ENCODE measurements at regions of chr9 and their contacts with region 1.

Region 1: GRCh38 chr9:37784616-37785483 is at the start of gene EXOSC3:
- DNase-seq: peak; percentile 71 to 84
- H3K4me3 ChIP-seq: peak within 1 kb of the TSS; percentile 78 to 99 (median 98)
- H3K27ac ChIP-seq: peak within 1 kb of the TSS; percentile 78 to 90
- H3K4me1 ChIP-seq: peaks cover 0 to 13% of the 10 kb centered on the region in 2 donors
- H3K27me3 ChIP-seq: peaks cover 0 to 3% of the 10 kb centered on the region in 2 donors
- CTCF ChIP-seq: no peak
- POLR2A ChIP-seq: peak; percentile 55
- total RNA-seq, gene EXOSC3: 40.6 to 55.0 (median 49.9) TPM

Region 2: DNA sequence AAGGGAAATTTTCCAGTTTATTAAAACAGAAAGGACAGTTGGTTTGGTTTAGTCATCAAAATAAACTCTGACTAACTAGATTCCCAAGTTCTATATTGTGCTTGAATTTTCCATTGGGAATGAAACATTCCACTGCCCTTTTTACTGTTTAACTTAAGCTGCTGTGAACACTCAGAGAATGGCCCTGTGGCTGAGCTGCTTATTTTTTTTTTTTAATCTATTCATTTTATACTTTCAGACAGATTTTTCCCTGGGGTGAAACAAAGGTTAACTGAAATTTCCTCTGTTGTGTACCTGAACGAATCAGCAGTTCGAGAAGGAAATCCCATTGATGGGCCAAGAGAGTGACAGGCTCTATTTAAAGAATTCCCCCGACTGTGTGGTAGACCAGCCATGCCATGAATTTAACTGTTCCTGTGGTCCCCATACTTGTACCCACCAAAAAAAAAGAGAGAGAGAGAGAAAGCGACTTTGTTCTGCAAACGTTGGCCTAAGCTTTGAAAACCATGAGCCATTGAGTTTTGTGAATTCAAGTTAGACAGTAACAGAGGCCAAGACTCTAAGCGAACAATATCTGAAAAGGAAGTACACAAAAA is 501.0 kb before region 1 on chr9:
- intact Hi-C with region 1: loop called (anchors 5 kb)
- DNase-seq: no peak
- H3K4me3 ChIP-seq: no peak overlapping the region
- H3K27ac ChIP-seq: no peak overlapping the region
- H3K4me1 ChIP-seq: peaks cover 0 to 3% of the 10 kb centered on the region in 2 donors
- H3K27me3 ChIP-seq: no peaks in the 10 kb centered on the region
- CTCF ChIP-seq: no peak
- POLR2A ChIP-seq: no peak

Region 3: DNA sequence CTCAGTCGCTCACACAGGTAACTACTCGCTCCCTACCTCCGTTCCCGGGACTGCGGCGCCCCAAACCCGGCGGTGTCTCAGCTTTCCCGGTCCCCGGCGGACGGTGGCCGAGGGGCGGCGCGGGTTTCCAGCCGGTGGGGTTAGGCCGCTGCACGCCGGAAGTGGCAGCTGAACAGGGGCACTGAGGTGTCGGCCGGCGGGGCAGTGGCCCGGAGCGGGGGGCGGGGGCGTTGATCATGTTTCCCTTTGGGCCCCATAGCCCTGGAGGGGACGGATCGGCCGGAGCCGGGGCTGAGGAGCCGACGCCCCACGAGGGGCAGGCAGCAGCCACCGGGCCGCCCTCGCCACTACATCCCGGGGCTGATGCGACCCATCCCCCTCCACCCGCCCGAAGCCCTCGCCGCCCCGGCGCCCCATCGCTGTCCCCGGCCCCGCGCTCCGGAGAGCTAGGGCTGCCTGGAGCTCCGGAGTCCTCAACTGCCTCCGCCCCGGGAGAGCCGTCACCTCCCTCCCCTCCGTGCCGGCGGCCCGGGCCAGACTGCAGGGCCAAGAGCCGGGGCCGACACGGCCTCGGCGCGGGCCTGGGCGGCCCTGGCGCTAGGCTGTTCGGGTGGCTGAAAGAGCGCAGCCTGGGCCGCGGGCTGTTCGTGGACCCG is 15.9 kb after region 1 on chr9 and contains the start of gene DCAF10:
- intact Hi-C with region 1: no loop called
- DNase-seq: peak; percentile 71 to 87
- H3K4me3 ChIP-seq: peak within 1 kb of the TSS; percentile 94 to 97 (median 95)
- H3K27ac ChIP-seq: peak within 1 kb of the TSS; percentile 91 to 93
- H3K4me1 ChIP-seq: peaks cover 0 to 13% of the 10 kb centered on the region in 2 donors
- H3K27me3 ChIP-seq: no peaks in the 10 kb centered on the region
- CTCF ChIP-seq: peak in 1 of 3 donors; percentile 15
- POLR2A ChIP-seq: peak; percentile 42
- total RNA-seq, gene DCAF10: 29.8 to 44.8 (median 38.7) TPM

Measured in breast epithelium (tissue), 4 donors.